Astrocyte of the cerebellum (primary cell): ENCODE measurements at regions of chr20 and their contacts with region 1.

Region 1: GRCh38 chr20:17904027-17904426 is 64.6 kb downstream of the SNX5 start:
- DNase-seq: no peak
- H3K4me3 ChIP-seq: no peak overlapping the region
- CTCF ChIP-seq: no peak

Region 2: DNA sequence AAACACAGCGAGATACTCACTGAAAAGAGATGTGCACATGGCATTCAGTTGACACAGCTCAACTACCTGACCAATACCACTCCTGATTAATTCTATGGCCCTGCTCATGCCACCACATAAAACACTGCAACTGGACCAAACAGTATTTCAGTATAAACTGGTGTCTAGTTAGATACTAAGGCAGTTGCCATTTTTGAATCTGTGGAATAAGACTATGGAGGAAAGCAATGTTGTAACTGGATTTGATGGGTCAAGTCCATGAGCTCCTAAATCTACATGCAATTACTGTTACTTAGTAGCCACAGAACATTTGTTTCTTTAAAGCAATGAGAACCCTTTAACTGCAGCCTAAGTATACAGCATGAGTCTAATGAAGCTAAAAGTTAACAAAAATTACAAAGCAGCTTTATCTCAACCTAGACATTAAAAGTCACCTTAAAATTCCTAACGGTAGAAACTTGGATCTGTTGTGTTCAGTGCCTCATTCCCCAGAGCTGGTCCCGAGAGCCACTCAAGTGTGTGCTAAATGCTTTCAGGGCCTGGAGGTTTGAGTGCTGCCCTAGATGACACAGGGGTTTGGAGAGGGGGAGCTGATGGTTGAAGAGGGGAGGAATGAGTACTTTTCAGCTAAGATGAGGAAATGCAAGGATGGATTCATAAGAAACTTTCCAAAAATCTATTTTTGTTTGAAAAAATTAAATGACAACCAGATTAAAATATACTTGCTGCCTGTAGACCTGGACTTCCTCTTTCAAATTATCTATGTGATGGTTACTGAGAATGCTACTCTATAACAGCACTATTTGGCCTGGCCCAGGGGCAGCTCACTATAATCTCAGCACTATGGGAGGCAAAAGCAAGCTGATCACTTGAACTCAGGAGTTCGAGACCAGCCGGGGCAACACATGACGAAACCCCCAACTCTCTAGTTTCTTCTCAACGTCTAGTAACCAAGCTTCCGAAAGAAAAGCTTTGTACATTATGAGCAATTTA is 49.0 kb after region 1 on chr20:
- in situ Hi-C with region 1: loop called (anchors 5 kb)
- DNase-seq: no peak
- H3K4me3 ChIP-seq: no peak overlapping the region
- CTCF ChIP-seq: no peak